ENCODE measurements at regions of chr2 and their contacts with region 1.

Region 1: DNA sequence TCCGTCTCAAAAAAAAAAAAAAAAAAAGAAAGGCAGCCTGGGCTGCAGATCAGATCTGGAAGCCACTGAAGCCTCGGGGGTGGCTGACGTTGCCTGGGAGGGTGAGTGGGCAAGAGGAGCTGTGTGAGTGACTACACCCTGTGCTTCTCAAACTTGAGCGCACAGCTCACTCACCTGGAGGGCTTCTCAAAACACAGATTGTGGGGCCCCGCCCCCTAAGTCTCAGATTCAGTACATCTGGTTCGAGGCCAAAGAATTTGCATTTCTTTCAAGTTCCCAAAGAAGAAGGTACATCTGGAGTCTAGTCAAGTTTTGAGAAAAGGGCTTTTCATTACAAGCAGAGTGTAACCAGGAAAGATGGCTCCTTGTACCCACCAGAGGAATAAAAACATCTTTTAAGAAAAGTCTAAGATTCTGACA is 97.7 kb upstream of the CAB39 start:
- DNase-seq: no peak
- ATAC-seq: no peak

Region 2: DNA sequence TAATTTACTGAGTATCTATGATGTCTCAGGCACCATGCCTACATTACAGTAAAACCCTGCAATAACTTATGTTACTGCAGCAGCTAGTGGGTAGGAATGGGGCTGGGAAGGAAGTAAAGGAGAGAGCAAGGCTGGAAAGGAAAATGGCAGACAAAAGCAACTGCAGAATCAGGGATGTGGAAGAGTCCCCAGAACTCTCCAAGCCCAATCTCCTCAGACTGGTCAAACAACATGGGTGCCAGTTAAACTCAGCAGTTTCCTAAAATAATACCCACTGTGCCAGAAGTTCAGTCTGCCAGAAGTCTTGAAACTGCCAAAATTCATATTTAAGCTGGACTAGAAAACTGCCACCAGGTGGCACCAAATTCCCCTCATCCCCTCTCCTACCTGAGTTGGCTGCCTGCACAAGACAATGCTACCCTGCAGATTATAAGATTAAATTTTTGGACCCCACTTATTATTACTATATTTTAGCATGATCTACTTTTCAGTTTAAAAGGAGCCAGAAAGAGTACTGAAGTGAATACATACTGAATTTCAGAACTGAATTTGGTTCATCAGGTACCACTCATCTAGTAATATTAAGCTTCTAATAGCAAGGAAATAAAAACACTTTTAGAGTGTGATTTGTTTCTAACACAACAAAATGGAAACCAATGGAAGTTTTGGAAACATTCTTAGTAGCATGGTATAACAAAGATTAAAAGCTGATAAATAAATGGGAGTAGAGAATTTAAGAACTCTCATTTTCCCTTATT is 813.7 kb before region 1 on chr2:
- intact Hi-C with region 1: loop called in 1 of 2 experiments (anchors 5 kb)
- DNase-seq: peak; percentile 49
- ATAC-seq: peak; percentile 61 to 87

Region 3: GRCh38 chr2:230007931-230008707 is 606.8 kb before region 1 on chr2:
- intact Hi-C with region 1: loop called (anchors 2 to 5 kb)
- DNase-seq: peak; percentile 73
- ATAC-seq: peak; percentile 61 to 78

Region 4: GRCh38 chr2:230160112-230160660 is 454.7 kb before region 1 on chr2:
- intact Hi-C with region 1: loop called (anchors 2 to 10 kb)
- DNase-seq: peak; percentile 40
- ATAC-seq: peak; percentile 73

Measured in left cardiac atrium (tissue), 4 donors.